ENCODE measurements at regions of chr17 and their contacts with region 1.

Region 1: GRCh38 chr17:47789611-47790561 is 31.7 kb downstream of the OSBPL7 start:
- DNase-seq: no peak
- ATAC-seq: peak; percentile 92
- H3K4me3 ChIP-seq: no peak overlapping the region
- H3K27ac ChIP-seq: no peak overlapping the region
- H3K4me1 ChIP-seq: peaks cover 0 to 4% of the 10 kb centered on the region in 2 experiments; a peak in 1 of 4 replicates
- H3K27me3 ChIP-seq: peaks cover 55% of the 10 kb centered on the region
- CTCF ChIP-seq: peak in 2 of 3 experiments; percentile 39 to 42; a peak in 4 of 6 replicates
- POLR2A ChIP-seq: no peak
- RAD21 ChIP-seq: peak; percentile 56

Region 2: GRCh38 chr17:47751471-47751870 is 38.4 kb before region 1 on chr17:
- CTCF ChIA-PET with region 1: no interaction called
- POLR2A ChIA-PET with region 1: no interaction called
- RAD21 ChIA-PET with region 1: no interaction called
- intact Hi-C with region 1: loop called (anchors 5 kb)
- DNase-seq: no peak
- ATAC-seq: no peak
- H3K4me3 ChIP-seq: no peak overlapping the region
- H3K27ac ChIP-seq: no peak overlapping the region
- H3K4me1 ChIP-seq: peaks cover 2 to 11% of the 10 kb centered on the region in 2 experiments; a peak in 3 of 4 replicates
- H3K27me3 ChIP-seq: no peaks in the 10 kb centered on the region
- CTCF ChIP-seq: no peak
- POLR2A ChIP-seq: no peak
- RAD21 ChIP-seq: no peak

Region 3: GRCh38 chr17:47840740-47841603 is 51.1 kb after region 1 on chr17 and contains the start of gene SCRN2:
- CTCF ChIA-PET with region 1: no interaction called
- POLR2A ChIA-PET with region 1: no interaction called
- RAD21 ChIA-PET with region 1: no interaction called
- intact Hi-C with region 1: no loop called
- DNase-seq: peak; percentile 81
- ATAC-seq: peak; percentile 88
- H3K4me3 ChIP-seq: peak within 1 kb of the TSS; percentile 94 to 98
- H3K27ac ChIP-seq: peak within 1 kb of the TSS; percentile 69
- H3K4me1 ChIP-seq: peaks cover 25 to 46% of the 10 kb centered on the region in 2 experiments
- H3K27me3 ChIP-seq: no peaks in the 10 kb centered on the region
- CTCF ChIP-seq: peak; percentile 98 to 100 (median 99)
- POLR2A ChIP-seq: no peak
- RAD21 ChIP-seq: peak; percentile 100
- total RNA-seq, gene SCRN2: 53.2 TPM